PC-9 (cell line): ENCODE measurements at regions of chr19 and their contacts with region 1.

Region 1: GRCh38 chr19:55289117-55289796 is 5.5 kb downstream of the BRSK1 start:
- DNase-seq: no peak
- H3K4me3 ChIP-seq: no peak overlapping the region
- H3K27ac ChIP-seq: no peak overlapping the region
- H3K4me1 ChIP-seq: no peaks in the 10 kb centered on the region
- H3K27me3 ChIP-seq: no peaks in the 10 kb centered on the region
- CTCF ChIP-seq: no peak

Region 2: GRCh38 chr19:54463531-54464043 is 825.7 kb before region 1 on chr19 and contains the start of gene LENG9:
- CTCF ChIA-PET with region 1: no interaction called
- POLR2A ChIA-PET with region 1: no interaction called
- intact Hi-C with region 1: no loop called
- DNase-seq: peak; percentile 97 to 99
- H3K4me3 ChIP-seq: peak within 1 kb of the TSS; percentile 77
- H3K27ac ChIP-seq: peak within 1 kb of the TSS; percentile 89
- H3K4me1 ChIP-seq: peaks cover 18% of the 10 kb centered on the region
- H3K27me3 ChIP-seq: no peaks in the 10 kb centered on the region
- CTCF ChIP-seq: no peak
- total RNA-seq, gene LENG9: 7.0 and 8.9 TPM in 2 replicates

Region 3: DNA sequence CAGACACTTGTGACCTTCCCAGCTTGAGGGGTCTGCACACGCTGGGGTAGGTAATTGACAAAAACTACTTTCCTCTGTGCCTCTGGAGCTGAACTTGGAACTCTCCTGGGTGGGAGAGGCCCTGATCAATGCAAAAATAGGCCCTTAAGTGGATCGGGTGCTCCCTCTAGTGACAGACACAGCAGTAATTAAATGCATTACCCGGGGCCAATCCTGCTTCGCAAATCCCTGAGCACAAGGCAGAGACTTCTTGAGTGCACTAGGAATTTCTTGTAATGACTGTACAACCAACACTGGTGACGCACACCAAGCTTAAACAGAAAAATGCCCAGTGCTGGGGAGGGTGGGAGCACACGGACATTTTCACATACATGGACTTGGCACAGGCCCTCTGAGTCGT is 128.9 kb after region 1 on chr19:
- CTCF ChIA-PET with region 1: no interaction called
- POLR2A ChIA-PET with region 1: no interaction called
- intact Hi-C with region 1: loop called (anchors 1 kb)
- DNase-seq: peak; percentile 74 to 79
- H3K4me3 ChIP-seq: no peak overlapping the region
- H3K27ac ChIP-seq: no peak overlapping the region
- H3K4me1 ChIP-seq: no peaks in the 10 kb centered on the region
- H3K27me3 ChIP-seq: peaks cover 33% of the 10 kb centered on the region
- CTCF ChIP-seq: peak; percentile 94